ENCODE measurements at regions of chr9 and their contacts with region 1.

Region 1: GRCh38 chr9:131203431-131204218 is 72.7 kb downstream of the FAM78A start:
- DNase-seq: no peak
- ATAC-seq: no peak
- H3K4me3 ChIP-seq: no peak overlapping the region
- H3K27ac ChIP-seq: no peak overlapping the region
- H3K4me1 ChIP-seq: peaks cover 0 to 6% (median 0%) of the 10 kb centered on the region in 9 donors
- H3K27me3 ChIP-seq: no peaks in the 10 kb centered on the region
- CTCF ChIP-seq: peak in 3 of 9 donors; percentile 11 to 24 (median 14)

Region 2: GRCh38 chr9:131149688-131150053 is 54.0 kb before region 1 on chr9:
- intact Hi-C with region 1: loop called in 1 of 10 experiments (anchors 10 kb)
- DNase-seq: no peak
- ATAC-seq: no peak
- H3K4me3 ChIP-seq: no peak overlapping the region
- H3K27ac ChIP-seq: no peak overlapping the region
- H3K4me1 ChIP-seq: no peaks in the 10 kb centered on the region
- H3K27me3 ChIP-seq: no peaks in the 10 kb centered on the region
- CTCF ChIP-seq: no peak

Region 3: GRCh38 chr9:131277910-131278701 is 74.5 kb after region 1 on chr9:
- intact Hi-C with region 1: no loop called
- DNase-seq: peak; percentile 87 to 92
- ATAC-seq: peak; percentile 40 to 70 (median 60)
- H3K4me3 ChIP-seq: peak overlapping the region; percentile 59 to 92 (median 84)
- H3K27ac ChIP-seq: peak overlapping the region; percentile 89 to 99 (median 98)
- H3K4me1 ChIP-seq: peaks cover 14 to 52% (median 33%) of the 10 kb centered on the region in 9 donors
- H3K27me3 ChIP-seq: peaks cover 0 to 30% (median 14%) of the 10 kb centered on the region in 7 donors
- CTCF ChIP-seq: no peak

Measured in heart right ventricle (tissue), 16 donors.